OCI-LY7 (cell line): ENCODE measurements at regions of chr19 and their contacts with region 1.

Region 1: GRCh38 chr19:28466107-28467045 is 746.6 kb downstream of the UQCRFS1 start:
- DNase-seq: peak; percentile 72
- H3K4me3 ChIP-seq: no peak overlapping the region
- H3K27ac ChIP-seq: no peak overlapping the region
- H3K4me1 ChIP-seq: peaks cover 25% of the 10 kb centered on the region
- CTCF ChIP-seq: peak; percentile 97

Region 2: DNA sequence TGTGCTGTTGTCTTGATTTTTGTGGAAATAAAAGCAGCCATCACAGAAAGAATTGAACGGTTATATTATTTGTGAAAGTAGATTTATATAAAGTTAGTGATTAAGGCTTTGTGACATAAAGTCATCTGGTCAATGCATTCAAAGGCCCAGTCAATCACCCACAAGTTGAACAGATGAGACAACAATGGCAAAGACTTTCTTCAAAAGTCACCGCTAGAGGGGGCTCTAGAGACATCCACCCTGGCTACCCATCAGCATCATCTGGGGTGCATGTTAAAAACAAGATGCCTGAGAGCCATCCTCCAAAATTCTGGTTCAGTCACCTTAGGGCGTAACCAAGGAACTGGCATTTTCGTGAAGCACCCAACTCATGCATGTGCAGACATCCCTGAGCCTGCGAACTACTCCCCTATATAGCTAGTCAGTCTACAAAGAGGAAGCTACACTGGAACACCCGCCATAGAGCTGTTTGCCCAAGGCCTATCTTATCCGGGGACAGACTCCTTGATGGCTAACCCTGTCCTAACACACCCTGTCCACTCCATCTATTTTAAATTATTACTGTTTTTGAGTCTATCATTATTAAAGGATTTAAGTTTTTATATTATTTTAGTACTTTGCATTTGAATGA is 224.0 kb before region 1 on chr19:
- CTCF ChIA-PET with region 1: no interaction called
- POLR2A ChIA-PET with region 1: no interaction called
- intact Hi-C with region 1: loop called (anchors 10 kb)
- DNase-seq: peak; percentile 53
- H3K4me3 ChIP-seq: no peak overlapping the region
- H3K27ac ChIP-seq: no peak overlapping the region
- H3K4me1 ChIP-seq: no peaks in the 10 kb centered on the region
- CTCF ChIP-seq: peak; percentile 87

Region 3: DNA sequence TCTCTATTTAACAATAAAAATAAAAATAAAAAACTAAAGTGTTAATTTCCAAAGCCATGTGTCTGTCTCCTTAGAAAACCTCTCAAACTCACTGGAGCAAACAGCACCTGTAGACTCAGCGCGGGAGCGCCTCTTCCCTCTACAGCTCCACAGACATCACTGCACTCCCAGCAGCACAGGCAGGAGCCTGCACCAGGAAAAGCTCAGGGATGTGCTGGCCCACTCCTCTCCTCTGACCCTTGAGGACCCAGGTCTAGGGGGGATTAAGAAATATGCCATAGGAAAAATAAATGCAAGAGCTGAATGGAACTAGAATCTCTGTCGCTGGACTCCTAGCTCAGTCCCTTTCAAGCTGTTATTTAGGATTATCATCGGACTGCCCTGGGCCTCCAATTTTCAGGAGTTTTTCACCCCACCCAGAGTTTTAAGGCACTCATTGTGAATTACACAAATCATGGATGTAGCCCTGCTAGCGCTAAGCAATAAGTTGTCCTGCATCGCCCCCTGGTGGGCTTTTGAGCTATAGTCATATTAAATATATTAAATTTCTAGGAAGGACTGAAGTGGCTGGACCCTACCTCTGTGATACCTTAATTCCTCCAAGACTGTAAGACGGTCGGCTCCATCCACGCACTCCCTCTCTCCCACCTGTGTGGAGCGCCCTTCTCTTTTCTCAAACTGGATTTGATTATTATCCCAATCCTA is 412.6 kb after region 1 on chr19:
- CTCF ChIA-PET with region 1: no interaction called
- POLR2A ChIA-PET with region 1: no interaction called
- intact Hi-C with region 1: loop called (anchors 5 kb)
- DNase-seq: peak; percentile 82
- H3K4me3 ChIP-seq: no peak overlapping the region
- H3K27ac ChIP-seq: no peak overlapping the region
- H3K4me1 ChIP-seq: no peaks in the 10 kb centered on the region
- CTCF ChIP-seq: peak; percentile 84